ENCODE measurements at regions of chr17 and their contacts with region 1.

Region 1: GRCh38 chr17:77494664-77495435 is 354.1 kb downstream of the SEC14L1 start:
- DNase-seq: peak; percentile 59 to 83 (median 75)
- ATAC-seq: peak; percentile 64
- H3K4me3 Mint-ChIP-seq: peak overlapping the region in 3 of 10 donors; percentile 6 to 49 (median 16)
- H3K27ac Mint-ChIP-seq: peak overlapping the region; percentile 80 to 94 (median 90)
- H3K4me1 Mint-ChIP-seq: peaks cover 12 to 34% (median 21%) of the 10 kb centered on the region in 4 donors
- H3K27me3 Mint-ChIP-seq: no peaks in the 10 kb centered on the region

Region 2: GRCh38 chr17:77382966-77383612 is 111.8 kb before region 1 on chr17:
- POLR2A ChIA-PET with region 1: interaction called, 17 read pairs
- DNase-seq: no peak
- ATAC-seq: peak; percentile 7 to 9
- H3K4me3 Mint-ChIP-seq: peak overlapping the region in 9 of 10 donors; percentile 75 to 90 (median 82)
- H3K27ac Mint-ChIP-seq: peak overlapping the region; percentile 75 to 94 (median 90)
- H3K4me1 Mint-ChIP-seq: peaks cover 49 to 94% (median 88%) of the 10 kb centered on the region in 4 donors
- H3K27me3 Mint-ChIP-seq: no peaks in the 10 kb centered on the region

Region 3: GRCh38 chr17:77429919-77430752 is 64.7 kb before region 1 on chr17:
- POLR2A ChIA-PET with region 1: interaction called, 243 read pairs
- DNase-seq: peak; percentile 71 to 92 (median 82)
- ATAC-seq: peak; percentile 18 to 37
- H3K4me3 Mint-ChIP-seq: peak overlapping the region in 9 of 10 donors; percentile 16 to 99 (median 86)
- H3K27ac Mint-ChIP-seq: peak overlapping the region; percentile 80 to 100 (median 97)
- H3K4me1 Mint-ChIP-seq: peaks cover 45 to 94% (median 87%) of the 10 kb centered on the region in 4 donors
- H3K27me3 Mint-ChIP-seq: no peaks in the 10 kb centered on the region

Region 4: DNA sequence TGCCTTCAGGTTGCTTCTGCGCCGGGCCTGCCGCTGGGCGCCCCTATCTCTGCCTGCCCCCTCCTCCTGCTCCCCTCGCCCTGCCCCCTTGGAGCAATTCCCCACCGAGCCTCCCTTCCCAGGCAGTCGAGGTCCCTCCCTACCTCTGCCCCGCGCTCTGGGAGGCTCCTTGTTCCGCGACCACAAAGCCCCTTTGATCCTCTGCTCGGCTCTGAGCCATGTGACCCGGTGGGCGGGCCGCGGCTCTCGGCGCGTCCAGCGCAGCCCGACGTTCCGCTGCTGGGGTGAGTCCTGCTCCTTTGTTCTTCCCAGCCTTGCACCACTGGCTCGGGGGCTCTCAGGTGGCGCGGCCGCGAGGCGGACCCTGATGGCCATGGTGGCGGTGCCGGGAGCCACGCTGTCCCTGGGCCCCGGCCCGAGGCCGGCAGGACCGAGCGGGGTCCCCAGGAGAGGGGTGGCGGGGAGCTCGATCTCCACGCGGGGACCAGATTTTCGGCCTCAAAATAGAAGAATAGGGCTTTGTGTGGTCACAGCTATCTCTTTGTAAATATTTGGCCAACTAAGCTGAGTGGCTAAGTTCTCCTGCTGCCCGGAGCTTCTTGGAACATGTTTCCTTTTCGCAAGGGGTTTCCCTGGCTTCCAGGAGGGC is 43.5 kb before region 1 on chr17:
- POLR2A ChIA-PET with region 1: interaction called, 76 read pairs
- DNase-seq: peak in 9 of 10 donors; percentile 60 to 81 (median 68)
- ATAC-seq: peak; percentile 50 to 62
- H3K4me3 Mint-ChIP-seq: peak overlapping the region; percentile 91 to 98 (median 96)
- H3K27ac Mint-ChIP-seq: peak overlapping the region; percentile 92 to 99 (median 99)
- H3K4me1 Mint-ChIP-seq: peaks cover 28 to 67% (median 54%) of the 10 kb centered on the region in 4 donors
- H3K27me3 Mint-ChIP-seq: no peaks in the 10 kb centered on the region

Region 5: DNA sequence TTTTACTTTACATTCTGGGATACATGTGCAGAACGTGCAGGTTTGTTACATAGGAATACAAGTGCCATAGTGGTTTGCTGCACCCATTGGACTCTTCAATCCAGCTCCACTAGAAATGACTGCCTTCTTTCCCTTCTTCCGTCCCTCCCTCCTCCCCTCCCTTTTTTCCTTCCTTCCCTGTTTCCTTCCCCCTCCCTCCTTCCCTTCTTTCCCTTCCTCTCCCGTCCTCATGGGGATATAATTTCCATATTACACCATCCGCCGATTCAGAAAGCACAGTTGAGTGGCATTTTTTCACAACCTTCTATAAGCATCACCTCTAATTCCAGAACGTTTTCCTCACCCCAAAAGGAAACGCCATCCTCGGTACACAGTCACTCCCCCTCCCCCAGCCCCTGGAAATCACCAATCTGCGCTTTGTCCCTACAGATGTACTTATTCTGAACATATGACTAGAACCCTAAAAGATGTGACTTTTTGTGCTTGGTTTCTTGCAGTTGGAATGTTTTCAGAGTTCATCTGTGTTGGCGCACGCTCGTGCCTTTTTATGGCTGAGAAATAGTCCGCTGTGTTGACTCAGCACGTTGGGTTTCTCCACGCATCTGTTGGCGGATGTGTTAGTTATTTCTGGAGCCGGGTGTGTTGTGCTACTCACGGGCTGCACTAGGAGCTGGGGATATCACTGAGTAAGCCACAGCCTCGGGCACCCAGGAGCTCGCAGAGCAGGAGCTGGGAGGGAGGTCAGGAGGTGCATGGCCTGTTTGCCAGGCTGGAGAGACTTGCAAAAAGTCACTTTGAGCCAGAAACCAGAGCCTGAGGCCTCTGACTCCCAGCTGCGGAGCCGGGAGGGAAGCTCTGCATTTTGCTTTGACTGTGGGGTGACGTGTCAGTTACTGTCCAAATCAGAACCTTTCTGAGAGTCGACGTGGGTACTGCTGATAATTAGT is 17.6 kb before region 1 on chr17:
- POLR2A ChIA-PET with region 1: interaction called, 22 read pairs
- DNase-seq: no peak
- ATAC-seq: no peak
- H3K4me3 Mint-ChIP-seq: peak overlapping the region; percentile 31 to 81 (median 73)
- H3K27ac Mint-ChIP-seq: peak overlapping the region; percentile 87 to 98 (median 94)
- H3K4me1 Mint-ChIP-seq: peaks cover 57 to 87% (median 85%) of the 10 kb centered on the region in 4 donors
- H3K27me3 Mint-ChIP-seq: no peaks in the 10 kb centered on the region